ENCODE measurements at regions of chr22 and their contacts with region 1.

Region 1: GRCh38 chr22:37817705-37818408 is 5.3 kb upstream of the GALR3 start:
- H3K4me3 ChIP-seq: peak overlapping the region; percentile 13
- H3K27ac ChIP-seq: peak overlapping the region; percentile 88
- H3K4me1 ChIP-seq: peaks cover 3% of the 10 kb centered on the region; the same call in 1 of the 2 replicates
- CTCF ChIP-seq: peak; percentile 98

Region 2: GRCh38 chr22:37807410-37808293 is 10.2 kb before region 1 on chr22 and contains the start of gene GCAT:
- CTCF ChIA-PET with region 1: interaction called, 61 read pairs
- POLR2A ChIA-PET with region 1: interaction called, 28 read pairs
- H3K4me3 ChIP-seq: peak within 1 kb of the TSS; percentile 68
- H3K27ac ChIP-seq: peak within 1 kb of the TSS; percentile 45; the same call in 1 of the 2 replicates
- H3K4me1 ChIP-seq: peaks cover 6% of the 10 kb centered on the region; the same call in 1 of the 2 replicates
- CTCF ChIP-seq: no peak

Region 3: DNA sequence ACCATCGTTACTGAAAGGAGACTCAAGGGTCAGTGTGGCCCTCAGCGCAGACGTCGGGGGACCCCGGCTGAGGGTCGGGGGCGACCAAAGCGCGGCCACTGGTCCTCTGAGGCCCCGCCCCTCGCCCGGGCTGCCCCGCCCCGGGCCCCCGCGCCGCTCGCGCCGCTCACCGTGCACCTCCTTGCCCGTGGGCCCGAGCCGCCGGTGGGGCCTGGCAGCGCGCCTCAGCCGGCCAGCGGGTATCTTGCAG is 25.8 kb after region 1 on chr22:
- CTCF ChIA-PET with region 1: interaction called, 10 read pairs
- POLR2A ChIA-PET with region 1: interaction called, 12 read pairs
- H3K4me3 ChIP-seq: peak overlapping the region; percentile 74
- H3K27ac ChIP-seq: peak overlapping the region; percentile 95
- H3K4me1 ChIP-seq: no peaks in the 10 kb centered on the region
- CTCF ChIP-seq: no peak

Region 4: DNA sequence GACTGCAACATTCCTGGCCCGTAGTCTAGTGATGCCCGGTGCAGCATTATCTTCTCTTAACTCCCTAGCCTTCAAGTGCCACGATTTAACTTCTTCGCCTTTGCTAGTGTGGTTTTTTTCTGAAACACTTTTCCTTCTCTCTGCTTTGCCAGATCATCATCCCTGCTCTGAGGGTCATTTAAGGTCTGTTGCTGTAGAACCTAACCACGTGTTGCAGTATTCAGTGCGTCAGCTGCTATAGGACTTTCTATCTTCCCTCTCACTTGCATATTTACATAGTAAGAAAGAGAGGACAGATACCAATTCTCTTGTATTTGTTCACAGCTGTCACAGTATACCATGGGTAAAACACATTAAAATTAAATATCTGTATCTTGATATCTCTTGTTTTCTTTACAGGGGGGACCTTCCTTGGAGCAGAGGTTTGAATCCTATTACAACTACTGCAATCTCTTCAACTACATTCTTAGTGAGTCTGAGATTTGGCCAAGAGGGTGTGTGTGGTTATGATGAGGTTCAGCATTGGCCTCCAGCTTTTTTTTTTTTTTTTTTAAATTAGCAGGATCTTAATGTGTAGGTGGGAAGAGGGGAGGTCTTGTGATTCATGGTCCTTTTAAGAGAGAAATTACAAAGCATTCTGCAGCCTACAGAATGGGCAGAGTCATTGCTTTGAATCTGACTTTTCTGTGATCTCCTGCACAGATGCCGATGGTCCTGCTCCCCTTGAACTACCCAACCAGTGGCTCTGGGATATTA is 44.9 kb after region 1 on chr22:
- CTCF ChIA-PET with region 1: interaction called, 208 read pairs
- POLR2A ChIA-PET with region 1: interaction called, 23 read pairs
- H3K4me3 ChIP-seq: no peak overlapping the region
- H3K27ac ChIP-seq: peak overlapping the region; percentile 39
- H3K4me1 ChIP-seq: peaks cover 4% of the 10 kb centered on the region; the same call in 1 of the 2 replicates
- CTCF ChIP-seq: no peak

Region 5: DNA sequence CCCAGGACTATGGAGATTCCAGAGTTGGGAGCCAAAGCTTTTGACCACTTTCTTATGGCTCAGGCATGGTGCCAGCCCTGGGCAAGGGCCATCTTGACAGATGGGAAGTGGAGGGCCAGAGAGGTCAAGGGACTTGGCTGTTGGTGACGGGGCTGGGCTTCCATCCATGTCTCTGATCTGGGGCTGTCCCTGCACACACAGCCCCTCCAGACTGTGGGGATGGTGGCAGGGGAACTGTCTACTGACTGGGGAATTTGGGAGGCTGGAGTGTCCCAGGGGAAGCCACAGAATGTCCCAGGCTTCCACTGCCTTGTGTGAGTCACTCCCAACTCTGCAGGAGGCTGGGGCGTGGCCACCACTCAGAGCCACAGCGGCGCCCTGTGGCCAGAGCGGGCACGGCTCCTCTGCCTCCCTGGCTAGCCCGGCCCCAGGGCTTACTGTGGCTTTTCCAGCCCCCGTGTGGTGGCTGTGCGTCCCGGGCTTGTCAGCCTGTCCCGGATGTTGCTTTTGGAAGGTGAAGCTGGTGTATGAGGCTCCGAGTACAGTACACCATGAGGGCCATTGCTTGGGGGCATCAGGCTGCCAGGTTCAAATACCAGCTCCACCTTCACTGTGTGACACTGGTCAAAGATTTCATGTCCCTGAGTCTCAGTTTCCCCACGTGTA is 116.0 kb after region 1 on chr22:
- CTCF ChIA-PET with region 1: interaction called, 17 read pairs
- POLR2A ChIA-PET with region 1: interaction called, 3 read pairs
- H3K4me3 ChIP-seq: no peak overlapping the region
- H3K27ac ChIP-seq: peak overlapping the region; percentile 67
- H3K4me1 ChIP-seq: peaks cover 6% of the 10 kb centered on the region
- CTCF ChIP-seq: peak; percentile 98

Region 6: DNA sequence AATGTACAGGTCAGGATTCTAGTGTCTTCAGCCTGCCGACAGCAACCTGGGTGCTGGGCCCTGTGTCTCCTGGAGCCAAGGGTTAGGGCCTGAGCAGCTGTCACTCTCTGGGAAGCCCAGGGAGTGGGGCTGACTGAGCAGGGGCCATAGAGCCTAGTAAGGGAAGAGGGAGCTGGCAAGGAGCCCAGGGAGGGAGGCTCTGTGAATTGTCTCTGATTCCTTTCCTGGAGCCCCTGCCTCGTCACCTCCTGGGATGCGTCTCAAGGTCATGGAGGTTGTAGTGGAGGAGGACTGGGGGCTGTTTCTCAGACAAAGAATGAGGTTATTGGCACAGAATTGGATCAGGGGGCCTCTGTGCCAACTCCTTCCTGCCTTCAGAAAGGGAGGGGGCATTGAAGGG is 154.7 kb after region 1 on chr22:
- CTCF ChIA-PET with region 1: interaction called, 14 read pairs
- POLR2A ChIA-PET with region 1: no interaction called
- H3K4me3 ChIP-seq: no peak overlapping the region
- H3K27ac ChIP-seq: no peak overlapping the region
- H3K4me1 ChIP-seq: no peaks in the 10 kb centered on the region
- CTCF ChIP-seq: no peak